ENCODE measurements at regions of chr14 and their contacts with region 1.

Region 1: DNA sequence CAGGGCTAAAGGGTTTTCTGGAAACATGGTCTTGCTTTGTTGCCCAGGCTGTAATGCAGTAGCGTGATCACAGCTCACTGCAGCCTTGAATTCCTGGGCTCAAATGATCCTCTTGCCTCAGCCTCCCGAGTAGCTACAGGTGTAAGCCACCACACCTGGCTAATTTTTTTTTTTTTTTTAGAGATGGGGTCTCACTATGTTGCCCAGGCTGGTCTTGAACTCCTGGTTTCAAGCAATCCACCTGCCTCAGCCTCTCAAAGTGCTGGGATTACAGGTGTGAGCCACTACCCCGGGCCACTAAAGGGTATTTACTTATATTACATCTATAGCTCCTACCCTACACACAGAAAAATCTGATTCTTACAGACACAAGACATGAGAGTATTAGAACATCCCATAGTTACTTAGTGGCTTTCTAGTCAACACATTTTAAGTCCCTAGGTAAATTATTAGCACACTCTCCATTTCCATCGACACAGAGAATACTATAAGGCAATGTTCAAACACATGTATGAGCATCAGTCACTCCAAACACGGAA is 6.2 kb upstream of the DCAF11 start:
- DNase-seq: no peak
- H3K4me3 ChIP-seq: no peak overlapping the region
- H3K4me3 Mint-ChIP-seq: no peak overlapping the region
- H3K27ac Mint-ChIP-seq: no peak overlapping the region
- H3K4me1 ChIP-seq: peaks cover 8% of the 10 kb centered on the region; the same call in 1 of the 2 replicates
- H3K4me1 Mint-ChIP-seq: no peaks in the 10 kb centered on the region
- H3K27me3 ChIP-seq: no peaks in the 10 kb centered on the region
- H3K27me3 Mint-ChIP-seq: no peaks in the 10 kb centered on the region
- CTCF ChIP-seq: no peak

Region 2: DNA sequence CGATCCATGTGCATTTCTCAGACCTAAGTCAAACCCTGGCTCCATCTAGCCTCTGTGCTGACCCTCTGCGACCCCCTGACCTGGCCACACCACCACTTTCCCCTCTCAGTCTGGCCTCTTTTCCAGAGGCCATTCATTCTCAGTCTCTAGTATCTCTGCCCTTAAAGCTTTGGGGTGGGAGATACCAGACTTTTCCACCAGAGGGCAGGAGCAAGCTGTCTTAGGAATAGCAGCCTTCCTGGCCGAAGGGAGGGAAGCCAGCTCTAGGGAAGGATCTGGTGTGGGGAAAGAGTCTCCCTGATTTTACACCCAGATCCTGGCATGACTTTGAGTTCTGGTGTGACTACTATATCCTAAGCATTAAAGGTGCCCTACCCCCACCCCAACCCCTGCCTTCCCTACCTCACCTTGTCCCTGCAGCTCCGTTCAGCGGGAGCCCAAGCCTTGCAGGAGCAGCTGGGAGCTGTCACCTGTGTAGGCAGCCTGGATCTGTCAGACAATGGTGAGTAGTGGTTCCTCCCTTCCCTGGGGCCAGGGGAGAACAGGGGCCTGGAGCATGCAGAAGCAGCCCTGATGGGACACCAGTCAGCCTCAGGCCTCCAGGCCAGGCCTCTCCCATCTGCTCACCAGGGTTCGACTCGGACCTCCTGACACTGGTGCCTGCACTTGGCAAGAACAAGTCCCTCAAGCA is 50.0 kb before region 1 on chr14:
- CTCF ChIA-PET with region 1: interaction called, 155 read pairs
- POLR2A ChIA-PET with region 1: interaction called, 3 read pairs
- intact Hi-C with region 1: loop called (anchors 1 kb)
- DNase-seq: peak; percentile 70 to 81
- H3K4me3 ChIP-seq: no peak overlapping the region
- H3K4me3 Mint-ChIP-seq: no peak overlapping the region
- H3K27ac Mint-ChIP-seq: no peak overlapping the region
- H3K4me1 ChIP-seq: no peaks in the 10 kb centered on the region; the same call in 1 of the 2 replicates
- H3K4me1 Mint-ChIP-seq: no peaks in the 10 kb centered on the region
- H3K27me3 ChIP-seq: no peaks in the 10 kb centered on the region
- H3K27me3 Mint-ChIP-seq: peaks cover 3% of the 10 kb centered on the region
- CTCF ChIP-seq: peak; percentile 66 to 85

Region 3: DNA sequence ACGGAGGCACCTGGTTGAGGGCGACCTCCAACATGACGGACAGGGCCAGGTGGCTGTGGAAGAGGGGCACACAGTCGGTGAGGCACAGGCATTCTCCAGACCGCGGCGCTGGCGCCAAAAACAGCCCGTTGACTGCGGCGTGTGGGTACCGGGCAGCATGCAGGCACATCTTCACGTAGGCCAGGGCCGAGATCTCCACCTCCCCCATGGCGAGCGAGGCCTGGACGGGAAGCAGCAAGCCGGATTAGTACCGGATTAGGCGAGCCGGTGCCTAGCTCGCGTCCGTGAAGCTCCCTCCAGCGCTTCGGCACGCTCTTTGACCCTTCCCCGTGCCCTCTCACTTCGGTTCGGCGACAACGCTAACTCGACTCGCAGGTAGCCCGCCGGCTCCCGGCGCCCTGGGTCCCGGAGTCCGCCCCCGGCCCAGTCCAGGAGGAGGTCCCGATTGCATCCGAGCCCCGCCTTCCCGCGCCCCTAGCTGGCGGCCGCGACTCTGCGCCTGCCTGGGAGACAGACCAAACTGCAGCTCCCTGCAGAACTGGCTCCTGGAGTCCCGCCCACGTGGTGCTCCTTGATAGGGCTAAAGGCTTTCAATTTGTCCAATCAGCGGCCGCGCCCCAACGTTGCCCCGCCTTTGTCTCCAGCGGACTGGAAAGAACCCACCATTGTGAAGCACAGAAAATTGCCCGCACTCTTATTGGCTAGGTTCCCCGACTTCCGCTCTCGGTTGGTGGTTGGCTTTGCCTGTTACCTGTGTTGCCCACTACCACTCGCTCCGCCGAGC is 32.9 kb after region 1 on chr14 and contains the start of gene EMC9:
- CTCF ChIA-PET with region 1: interaction called, 17 read pairs
- POLR2A ChIA-PET with region 1: interaction called, 57 read pairs
- intact Hi-C with region 1: no loop called
- DNase-seq: peak; percentile 99 to 100
- H3K4me3 ChIP-seq: peak within 1 kb of the TSS; percentile 84
- H3K4me3 Mint-ChIP-seq: peak within 1 kb of the TSS; percentile 99
- H3K27ac Mint-ChIP-seq: peak within 1 kb of the TSS; percentile 88
- H3K4me1 ChIP-seq: no peaks in the 10 kb centered on the region; the same call in 1 of the 2 replicates
- H3K4me1 Mint-ChIP-seq: peaks cover 43% of the 10 kb centered on the region
- H3K27me3 ChIP-seq: no peaks in the 10 kb centered on the region
- H3K27me3 Mint-ChIP-seq: no peaks in the 10 kb centered on the region
- CTCF ChIP-seq: peak; percentile 13 to 50
- total RNA-seq, gene EMC9: 31.1 and 32.4 TPM in 2 replicates